Naive thymus-derived CD4-positive, alpha-beta T cell (primary cell): ENCODE measurements at regions of chr6 and their contacts with region 1.

Region 1: GRCh38 chr6:134436281-134436815 is 118.4 kb upstream of the SGK1 start:
- DNase-seq: peak in 1 of 9 donors; percentile 65
- ATAC-seq: peak; percentile 84
- H3K4me3 ChIP-seq: peak overlapping the region; percentile 14
- H3K4me3 Mint-ChIP-seq: peak overlapping the region in 2 of 10 donors; percentile 9 to 81
- H3K27ac ChIP-seq: no peak overlapping the region
- H3K27ac Mint-ChIP-seq: peak overlapping the region in 3 of 9 donors; percentile 6 to 94 (median 81)
- H3K4me1 ChIP-seq: no peaks in the 10 kb centered on the region
- H3K4me1 Mint-ChIP-seq: peaks cover 7 to 49% (median 21%) of the 10 kb centered on the region in 7 donors
- H3K27me3 ChIP-seq: no peaks in the 10 kb centered on the region
- H3K27me3 Mint-ChIP-seq: no peaks in the 10 kb centered on the region

Region 2: DNA sequence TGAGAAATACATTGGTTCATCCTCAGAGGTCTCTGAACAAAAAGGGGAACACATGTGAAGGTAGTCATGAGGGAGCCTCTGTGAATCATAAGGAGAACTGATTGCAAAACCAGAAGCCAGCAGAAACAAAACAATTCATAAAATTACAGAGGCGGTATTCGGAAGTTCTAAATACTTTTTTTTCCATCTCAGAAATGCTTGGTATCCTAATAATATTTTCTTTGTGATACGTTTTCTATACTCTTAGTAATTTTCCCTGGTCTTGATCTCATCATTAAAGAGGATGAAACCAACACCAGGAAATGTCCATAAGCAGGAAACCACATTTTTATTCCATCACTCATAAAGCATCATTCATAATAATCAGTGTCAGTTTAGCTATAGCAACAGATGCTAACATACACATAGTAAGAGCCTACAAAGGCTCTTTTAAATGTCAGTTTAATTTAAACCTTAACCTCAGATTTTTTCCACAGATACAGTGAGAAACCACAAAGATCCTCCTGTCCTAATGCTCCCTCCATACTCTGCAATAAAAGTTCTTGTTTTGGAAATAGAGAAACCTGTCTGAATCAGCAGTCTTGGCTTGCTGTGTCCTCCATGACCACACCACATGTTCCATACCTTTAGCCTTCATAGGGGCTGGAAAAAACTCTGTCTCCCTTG is 147.7 kb before region 1 on chr6:
- CTCF ChIA-PET with region 1: no interaction called
- POLR2A ChIA-PET with region 1: no interaction called
- intact Hi-C with region 1: loop called in 1 of 2 experiments (anchors 1 kb)
- DNase-seq: peak in 4 of 9 donors; percentile 6 to 50 (median 28)
- ATAC-seq: peak; percentile 81
- H3K4me3 ChIP-seq: no peak overlapping the region
- H3K4me3 Mint-ChIP-seq: peak overlapping the region in 7 of 10 donors; percentile 7 to 74 (median 46)
- H3K27ac ChIP-seq: no peak overlapping the region
- H3K27ac Mint-ChIP-seq: peak overlapping the region in 8 of 9 donors; percentile 23 to 87 (median 70)
- H3K4me1 ChIP-seq: peaks cover 7 to 9% of the 10 kb centered on the region in 2 donors
- H3K4me1 Mint-ChIP-seq: peaks cover 14 to 41% (median 20%) of the 10 kb centered on the region in 7 donors
- H3K27me3 ChIP-seq: no peaks in the 10 kb centered on the region
- H3K27me3 Mint-ChIP-seq: no peaks in the 10 kb centered on the region

Region 3: DNA sequence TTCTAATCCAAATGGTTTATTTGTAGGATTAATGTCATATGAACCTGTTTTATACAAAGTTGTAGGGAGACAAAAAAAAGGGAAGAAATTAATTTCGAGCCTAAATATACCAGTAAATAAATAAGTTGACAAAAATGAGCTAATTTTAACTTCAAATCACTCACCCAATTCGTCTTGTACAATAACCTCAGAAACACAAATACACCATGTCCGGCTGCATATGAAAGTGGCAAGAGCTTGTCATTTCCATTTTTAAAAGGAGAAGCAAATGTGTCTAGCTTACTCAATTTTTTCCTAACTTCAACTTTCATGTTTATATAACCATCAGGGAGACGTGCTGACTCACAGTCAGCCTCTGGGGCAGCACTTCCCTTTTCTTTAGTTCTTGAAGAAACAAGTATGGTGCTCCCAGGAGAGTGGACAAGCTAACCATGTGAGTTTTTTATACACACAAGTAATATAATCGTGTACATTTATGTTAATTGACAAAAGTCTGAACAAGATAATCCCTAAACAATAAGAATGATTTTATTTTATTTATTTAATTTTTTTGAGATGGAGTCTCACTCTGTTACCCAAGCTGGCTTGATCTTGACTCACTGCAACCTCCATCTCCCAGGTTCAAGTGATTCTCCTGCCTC is 62.9 kb before region 1 on chr6:
- CTCF ChIA-PET with region 1: no interaction called
- POLR2A ChIA-PET with region 1: no interaction called
- intact Hi-C with region 1: loop called in 1 of 2 experiments (anchors 2 kb)
- DNase-seq: no peak
- ATAC-seq: peak; percentile 71
- H3K4me3 ChIP-seq: no peak overlapping the region
- H3K4me3 Mint-ChIP-seq: peak overlapping the region in 5 of 10 donors; percentile 19 to 71 (median 38)
- H3K27ac ChIP-seq: no peak overlapping the region
- H3K27ac Mint-ChIP-seq: peak overlapping the region in 6 of 9 donors; percentile 20 to 92 (median 82)
- H3K4me1 ChIP-seq: peaks cover 0 to 14% of the 10 kb centered on the region in 2 donors
- H3K4me1 Mint-ChIP-seq: peaks cover 17 to 42% (median 37%) of the 10 kb centered on the region in 7 donors
- H3K27me3 ChIP-seq: no peaks in the 10 kb centered on the region
- H3K27me3 Mint-ChIP-seq: no peaks in the 10 kb centered on the region

Region 4: DNA sequence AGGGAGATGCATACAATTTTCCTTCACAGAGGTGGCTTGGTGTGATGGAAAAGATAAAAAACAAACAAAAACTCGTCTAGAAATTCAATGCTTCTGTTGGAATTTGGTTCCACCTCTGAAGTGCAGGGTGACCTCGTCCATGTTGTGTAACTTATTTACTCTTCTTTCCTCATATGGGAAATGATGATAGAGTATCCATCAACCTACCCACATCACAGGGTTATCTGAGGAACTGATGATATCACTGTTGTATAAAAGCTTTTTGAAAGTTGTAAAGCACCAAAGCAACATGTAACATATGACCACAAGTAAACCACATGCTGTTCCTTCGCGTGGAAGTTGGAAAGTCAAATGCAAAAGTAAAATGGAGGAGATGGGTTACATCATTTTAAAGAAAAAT is 93.6 kb after region 1 on chr6:
- CTCF ChIA-PET with region 1: no interaction called
- POLR2A ChIA-PET with region 1: no interaction called
- intact Hi-C with region 1: loop called in 1 of 2 experiments (anchors 1 kb)
- DNase-seq: peak in 7 of 9 donors; percentile 52 to 86 (median 76)
- ATAC-seq: peak; percentile 92
- H3K4me3 ChIP-seq: no peak overlapping the region
- H3K4me3 Mint-ChIP-seq: peak overlapping the region in 7 of 10 donors; percentile 11 to 47 (median 22)
- H3K27ac ChIP-seq: no peak overlapping the region
- H3K27ac Mint-ChIP-seq: peak overlapping the region; percentile 36 to 94 (median 77)
- H3K4me1 ChIP-seq: peaks cover 0 to 15% of the 10 kb centered on the region in 2 donors
- H3K4me1 Mint-ChIP-seq: peaks cover 25 to 61% (median 48%) of the 10 kb centered on the region in 7 donors
- H3K27me3 ChIP-seq: no peaks in the 10 kb centered on the region
- H3K27me3 Mint-ChIP-seq: no peaks in the 10 kb centered on the region